ENCODE measurements at regions of chr5 and their contacts with region 1.

Region 1: GRCh38 chr5:57173185-57174127 is at the start of gene GPBP1:
- DNase-seq: peak; percentile 96
- H3K4me3 Mint-ChIP-seq: peak within 1 kb of the TSS; percentile 96
- H3K27ac Mint-ChIP-seq: peak within 1 kb of the TSS; percentile 99
- H3K4me1 Mint-ChIP-seq: peaks cover 33% of the 10 kb centered on the region
- H3K27me3 Mint-ChIP-seq: no peaks in the 10 kb centered on the region
- total RNA-seq, gene GPBP1: 87.4 and 92.0 TPM in 2 replicates

Region 2: DNA sequence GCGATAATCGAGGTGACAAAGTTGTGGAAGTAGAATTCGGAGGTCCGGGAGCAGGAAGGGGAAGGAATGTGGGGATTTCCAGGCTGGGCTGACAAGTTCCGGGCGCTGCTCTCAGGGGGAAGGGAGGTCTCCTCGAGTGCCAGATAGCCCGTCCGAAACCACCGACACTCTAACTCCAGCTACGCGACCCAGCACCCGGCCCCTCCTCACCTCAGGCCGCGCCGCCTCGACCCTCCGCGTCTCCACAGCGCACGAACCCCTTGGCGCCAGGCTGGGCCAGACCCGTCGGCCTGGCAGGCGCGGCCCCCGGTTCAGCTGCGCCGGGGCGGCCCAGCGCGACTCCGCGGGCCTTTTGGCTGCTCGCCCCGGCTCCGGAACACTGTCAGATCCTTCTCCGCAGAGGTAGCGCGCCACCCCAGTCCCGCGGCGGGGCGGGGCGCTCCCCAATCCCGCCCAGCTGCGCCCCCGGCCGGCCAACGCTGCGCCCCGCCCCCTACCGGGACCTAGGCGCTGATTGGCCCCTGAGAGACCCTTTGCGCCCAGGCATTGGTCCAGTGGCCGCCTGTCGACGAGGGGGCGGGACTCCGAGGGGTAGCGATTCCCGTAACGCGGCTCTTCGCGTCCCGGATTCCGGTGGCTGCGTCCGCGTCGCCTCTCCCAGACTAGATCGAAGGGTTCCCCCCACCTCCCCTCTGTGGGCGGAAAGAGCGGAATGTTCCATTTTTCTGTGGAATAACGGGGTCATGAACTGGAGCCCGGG is 1178.7 kb before region 1 on chr5 and contains the start of gene IL6ST:
- intact Hi-C with region 1: loop called (anchors 5 kb)
- DNase-seq: peak; percentile 93
- H3K4me3 Mint-ChIP-seq: peak within 1 kb of the TSS; percentile 95
- H3K27ac Mint-ChIP-seq: peak within 1 kb of the TSS; percentile 94
- H3K4me1 Mint-ChIP-seq: peaks cover 53% of the 10 kb centered on the region
- H3K27me3 Mint-ChIP-seq: no peaks in the 10 kb centered on the region
- total RNA-seq, gene IL6ST: 56.2 and 67.2 TPM in 2 replicates

Region 3: DNA sequence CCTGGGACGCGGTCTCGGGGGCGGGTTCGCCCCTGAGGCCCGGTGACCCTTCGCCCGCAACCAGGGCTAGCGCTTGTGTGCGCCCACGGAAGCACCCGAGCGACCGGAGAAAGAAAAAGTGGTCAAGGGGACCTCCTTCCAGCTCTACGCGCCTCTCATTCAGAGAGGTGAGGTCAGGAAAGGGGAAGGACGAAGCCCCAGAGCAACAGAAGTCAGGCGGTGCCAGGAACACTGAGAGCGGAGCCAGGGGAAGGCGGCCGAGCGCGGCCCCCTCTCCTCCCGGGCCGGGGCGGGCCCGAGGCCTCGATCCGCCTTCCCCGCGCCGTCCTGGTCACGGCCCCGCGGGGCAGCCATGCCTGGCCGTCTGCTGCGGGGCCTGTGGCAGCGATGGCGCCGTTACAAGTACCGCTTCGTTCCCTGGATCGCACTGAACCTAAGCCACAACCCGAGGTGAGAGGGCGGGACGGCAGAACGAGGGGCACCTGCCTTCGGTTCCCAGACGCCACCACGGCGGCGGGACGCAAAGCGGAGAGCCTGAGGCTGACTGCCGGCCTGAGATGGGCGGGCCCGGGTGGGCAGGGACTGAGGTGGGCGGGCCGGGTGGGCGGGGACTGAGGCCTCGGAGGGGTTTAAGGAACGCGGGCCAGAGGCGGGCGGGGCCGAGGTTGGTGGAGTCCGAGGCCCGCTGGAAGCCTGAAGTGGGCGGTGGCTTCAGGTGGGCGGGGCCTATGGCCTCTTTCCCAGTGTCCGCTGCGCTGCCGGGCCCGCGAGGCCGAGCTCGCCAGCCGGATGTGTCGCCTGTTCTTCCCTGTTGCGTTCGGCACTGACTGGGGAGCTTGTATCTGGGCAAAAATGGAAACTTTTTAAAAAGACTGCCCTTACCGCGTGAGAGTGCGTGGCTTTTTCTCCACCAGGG is 263.9 kb before region 1 on chr5 and contains the start of gene SETD9:
- intact Hi-C with region 1: loop called (anchors 1 kb)
- DNase-seq: peak; percentile 91
- H3K4me3 Mint-ChIP-seq: peak within 1 kb of the TSS; percentile 86
- H3K27ac Mint-ChIP-seq: peak within 1 kb of the TSS; percentile 96
- H3K4me1 Mint-ChIP-seq: peaks cover 22% of the 10 kb centered on the region
- H3K27me3 Mint-ChIP-seq: peaks cover 10% of the 10 kb centered on the region
- total RNA-seq, gene SETD9: 11.0 and 13.1 TPM in 2 replicates

Region 4: DNA sequence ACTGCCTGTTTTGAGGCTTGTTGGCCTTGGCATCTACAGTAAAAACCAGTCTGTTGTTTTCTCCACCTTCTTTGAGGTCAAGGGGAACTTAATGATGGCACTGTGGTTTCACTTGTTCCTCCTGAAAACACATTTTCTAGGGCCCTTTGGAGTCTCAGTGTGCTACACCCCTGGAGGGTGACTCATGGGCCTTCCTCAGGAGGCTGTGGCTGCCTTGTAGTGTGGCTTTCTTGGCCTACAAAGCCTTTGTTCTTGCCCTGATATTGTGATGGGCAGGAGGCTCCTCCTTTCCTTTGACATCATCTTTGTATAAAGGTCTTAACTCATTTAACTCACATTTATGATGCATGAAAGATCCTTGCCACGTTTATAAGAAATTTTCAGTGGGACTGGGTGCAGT is 55.9 kb before region 1 on chr5:
- intact Hi-C with region 1: loop called (anchors 1 kb)
- DNase-seq: peak; percentile 66
- H3K4me3 Mint-ChIP-seq: no peak overlapping the region
- H3K27ac Mint-ChIP-seq: peak overlapping the region; percentile 73
- H3K4me1 Mint-ChIP-seq: peaks cover 20% of the 10 kb centered on the region
- H3K27me3 Mint-ChIP-seq: peaks cover 2% of the 10 kb centered on the region

Region 5: GRCh38 chr5:57193757-57194413 is 20.4 kb after region 1 on chr5:
- intact Hi-C with region 1: loop called (anchors 2 kb)
- DNase-seq: no peak
- H3K4me3 Mint-ChIP-seq: peak overlapping the region; percentile 39
- H3K27ac Mint-ChIP-seq: peak overlapping the region; percentile 73
- H3K4me1 Mint-ChIP-seq: peaks cover 54% of the 10 kb centered on the region
- H3K27me3 Mint-ChIP-seq: no peaks in the 10 kb centered on the region

Region 6: DNA sequence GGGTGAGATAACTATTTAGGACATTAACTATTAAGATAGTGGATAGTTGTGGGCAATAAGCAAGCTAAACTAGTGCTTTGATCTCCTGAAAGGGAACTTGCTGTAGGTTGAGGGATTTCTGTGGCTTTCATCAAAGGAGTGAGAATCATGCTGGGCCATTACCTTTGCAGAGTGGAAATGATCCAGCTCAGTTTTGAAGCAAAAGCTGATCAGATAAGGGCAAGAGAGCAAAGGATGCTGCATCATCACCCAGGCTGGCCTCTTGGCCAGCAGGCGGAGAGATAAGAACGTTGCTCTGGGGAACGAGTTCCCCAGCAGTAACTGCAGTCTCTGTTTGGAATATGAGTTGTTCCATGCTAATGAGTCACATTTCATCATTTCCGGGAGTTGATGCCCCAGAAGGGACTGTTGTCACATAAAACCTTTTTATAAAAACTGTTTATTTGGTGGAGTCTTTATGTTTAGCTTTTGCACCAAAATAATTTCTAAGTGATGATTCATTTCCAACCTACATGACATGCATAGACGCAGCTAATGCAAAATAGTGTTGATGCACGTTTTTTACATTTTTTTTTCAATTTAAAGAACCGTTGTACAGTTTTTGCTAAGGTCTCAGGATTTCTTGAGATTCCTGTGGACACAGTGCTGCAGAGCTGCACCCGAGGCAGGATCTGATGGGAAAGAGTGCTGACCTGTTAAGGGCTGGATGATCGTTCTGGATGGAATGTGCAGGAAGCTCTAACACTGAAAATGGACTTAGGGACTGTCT is 209.8 kb after region 1 on chr5:
- intact Hi-C with region 1: no loop called
- DNase-seq: peak; percentile 46
- H3K4me3 Mint-ChIP-seq: no peak overlapping the region
- H3K27ac Mint-ChIP-seq: peak overlapping the region; percentile 19
- H3K4me1 Mint-ChIP-seq: peaks cover 18% of the 10 kb centered on the region
- H3K27me3 Mint-ChIP-seq: peaks cover 2% of the 10 kb centered on the region

Region 7: GRCh38 chr5:58460732-58461286 is 1287.4 kb after region 1 on chr5:
- intact Hi-C with region 1: loop called (anchors 5 kb)
- DNase-seq: peak; percentile 85
- H3K4me3 Mint-ChIP-seq: peak overlapping the region; percentile 74
- H3K27ac Mint-ChIP-seq: peak overlapping the region; percentile 5
- H3K4me1 Mint-ChIP-seq: peaks cover 17% of the 10 kb centered on the region
- H3K27me3 Mint-ChIP-seq: peaks cover 21% of the 10 kb centered on the region

Measured in activated T-helper 2 cell treated with anti-CD3 and anti-CD28 coated beads, Interferon-gamma antibody, Interleukin-2, Interleukin-4, amounts not matched to agents 10 μg/mL and 5 μg/mL and 100 μg/mL, durations not matched to agents 14 hours and 24 hours and 36 hours (primary cell).